ENCODE measurements at regions of chr11 and their contacts with region 1.

Region 1: DNA sequence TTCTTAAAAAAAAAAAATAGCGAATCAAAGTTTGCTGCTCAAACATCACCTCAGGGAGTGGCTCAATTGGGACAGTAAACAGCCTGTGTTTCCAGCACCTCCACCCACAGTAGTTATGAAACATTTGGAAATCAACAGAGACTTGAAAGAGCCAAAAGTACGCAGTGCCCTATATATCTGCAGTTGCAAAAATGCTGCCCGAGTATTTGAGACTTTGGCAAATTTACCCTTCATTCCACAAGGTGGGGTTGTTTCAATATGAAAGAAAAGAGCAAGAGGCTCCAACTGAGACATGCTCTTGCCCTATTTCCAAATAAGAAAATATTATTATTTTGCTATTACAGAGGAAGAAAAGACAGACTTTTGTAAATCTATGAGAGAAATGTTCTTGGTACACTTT is 851.1 kb upstream of the RAG2 start:
- DNase-seq: peak; percentile 46 to 58 (median 51)
- H3K4me3 ChIP-seq: no peak overlapping the region
- H3K27ac ChIP-seq: no peak overlapping the region
- H3K4me1 ChIP-seq: peaks cover 0 to 18% (median 10%) of the 10 kb centered on the region in 4 experiments
- H3K27me3 ChIP-seq: no peaks in the 10 kb centered on the region

Region 2: GRCh38 chr11:37483761-37484160 is 34.6 kb after region 1 on chr11:
- CTCF ChIA-PET with region 1: no interaction called
- POLR2A ChIA-PET with region 1: no interaction called
- DNase-seq: no peak
- H3K4me3 ChIP-seq: no peak overlapping the region
- H3K27ac ChIP-seq: no peak overlapping the region
- H3K4me1 ChIP-seq: no peaks in the 10 kb centered on the region
- H3K27me3 ChIP-seq: no peaks in the 10 kb centered on the region

Region 3: GRCh38 chr11:38791302-38791961 is 1342.3 kb after region 1 on chr11:
- CTCF ChIA-PET with region 1: interaction called, 11 read pairs
- POLR2A ChIA-PET with region 1: no interaction called
- DNase-seq: peak; percentile 59 to 83 (median 76)
- H3K4me3 ChIP-seq: no peak overlapping the region
- H3K27ac ChIP-seq: no peak overlapping the region
- H3K4me1 ChIP-seq: no peaks in the 10 kb centered on the region
- H3K27me3 ChIP-seq: no peaks in the 10 kb centered on the region